ENCODE measurements at regions of chr19 and their contacts with region 1.

Region 1: GRCh38 chr19:1275260-1275975 is at the start of gene FAM174C:
- DNase-seq: peak; percentile 90 to 97 (median 96)
- ATAC-seq: peak; percentile 90
- H3K4me3 ChIP-seq: peak within 1 kb of the TSS; percentile 75
- H3K4me3 Mint-ChIP-seq: peak within 1 kb of the TSS; percentile 79 to 93 (median 88)
- H3K27ac ChIP-seq: peak within 1 kb of the TSS; percentile 93
- H3K27ac Mint-ChIP-seq: peak within 1 kb of the TSS; percentile 62 to 98 (median 95)
- H3K4me1 ChIP-seq: peaks cover 46 to 60% of the 10 kb centered on the region in 2 donors
- H3K4me1 Mint-ChIP-seq: peaks cover 40 to 60% (median 48%) of the 10 kb centered on the region in 7 donors
- H3K27me3 ChIP-seq: no peaks in the 10 kb centered on the region
- H3K27me3 Mint-ChIP-seq: no peaks in the 10 kb centered on the region
- total RNA-seq, gene FAM174C: 31.7 to 57.3 (median 47.7) TPM

Region 2: DNA sequence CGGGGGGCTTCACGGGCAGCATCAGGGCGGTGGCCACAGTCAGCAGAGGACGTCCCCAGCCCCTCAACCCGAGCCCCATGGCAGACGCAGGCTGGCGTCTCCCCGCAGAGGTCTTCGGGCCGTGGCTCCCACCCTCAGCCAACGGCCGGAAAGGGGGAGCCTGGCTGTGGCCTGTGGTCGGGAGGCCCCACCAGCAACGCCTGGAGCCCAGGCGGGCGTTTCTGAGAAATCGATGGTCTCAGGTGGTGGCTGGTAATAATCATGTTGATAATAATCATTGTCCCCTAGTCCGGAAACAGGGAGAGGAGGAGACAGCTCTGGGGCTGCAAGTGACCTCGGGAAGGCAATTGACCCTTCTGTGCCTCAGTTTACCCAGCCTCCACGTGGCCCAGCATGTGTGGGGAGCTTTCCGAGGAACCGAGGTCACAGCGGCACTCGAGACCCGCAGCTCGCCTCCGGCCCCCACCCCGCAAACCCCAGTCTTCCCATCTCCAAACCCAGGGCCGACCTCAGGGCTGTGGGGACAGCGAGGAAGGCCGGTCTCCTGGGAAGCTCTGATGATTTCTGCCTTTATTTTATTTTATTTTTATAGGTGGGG is 580.0 kb before region 1 on chr19 and contains the start of gene PRSS57:
- CTCF ChIA-PET with region 1: no interaction called
- POLR2A ChIA-PET with region 1: no interaction called
- intact Hi-C with region 1: no loop called
- DNase-seq: no peak
- ATAC-seq: peak; percentile 10
- H3K4me3 ChIP-seq: no peak within 1 kb of the TSS
- H3K4me3 Mint-ChIP-seq: peak within 1 kb of the TSS in 3 of 10 donors; percentile 16 to 63 (median 45)
- H3K27ac ChIP-seq: no peak within 1 kb of the TSS
- H3K27ac Mint-ChIP-seq: no peak within 1 kb of the TSS
- H3K4me1 ChIP-seq: no peaks in the 10 kb centered on the region
- H3K4me1 Mint-ChIP-seq: peaks cover 0 to 1% (median 0%) of the 10 kb centered on the region in 7 donors
- H3K27me3 ChIP-seq: peaks cover 0 to 2% of the 10 kb centered on the region in 2 donors
- H3K27me3 Mint-ChIP-seq: peaks cover 0 to 24% (median 15%) of the 10 kb centered on the region in 5 donors
- total RNA-seq, gene PRSS57: 0.27 to 2.1 TPM in 2 of 5 experiments, not detected in the others

Region 3: DNA sequence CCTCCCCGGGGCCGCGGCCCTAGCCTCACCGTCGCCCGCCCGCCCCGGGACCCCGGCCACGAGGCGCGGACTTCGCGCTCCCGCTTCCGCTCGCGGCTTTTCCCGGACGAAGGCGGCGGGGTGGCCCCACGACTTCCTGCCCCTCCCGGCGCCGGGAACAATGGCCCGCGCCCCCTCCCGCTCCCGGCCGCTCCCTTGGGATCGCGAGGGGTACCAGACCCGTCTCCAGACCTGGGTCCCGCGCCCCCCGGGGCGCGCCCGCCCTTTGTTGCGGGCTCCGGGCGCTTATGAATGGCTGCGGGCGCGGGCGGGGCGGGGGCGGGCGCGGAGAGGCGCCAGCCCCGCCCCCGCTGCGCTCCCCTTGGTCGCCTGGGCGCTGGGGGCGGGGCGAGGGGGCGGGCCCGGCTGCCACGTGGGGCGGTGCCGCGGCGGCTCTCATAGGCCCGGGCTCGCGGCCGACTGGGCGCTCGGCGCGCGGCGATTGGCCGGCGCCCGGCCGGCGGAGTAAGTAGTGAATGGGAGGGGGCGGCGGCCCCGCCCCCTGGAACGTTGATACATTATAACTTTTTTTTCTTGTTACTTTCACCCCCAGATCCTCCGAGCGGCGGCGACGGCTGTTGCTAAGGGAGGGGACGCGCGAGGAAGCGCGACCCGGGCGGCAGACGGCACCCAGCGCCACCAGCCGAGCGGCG is 26.0 kb before region 1 on chr19:
- CTCF ChIA-PET with region 1: interaction called, 7 read pairs
- POLR2A ChIA-PET with region 1: interaction called, 60 read pairs
- intact Hi-C with region 1: no loop called
- DNase-seq: peak; percentile 88 to 97 (median 94)
- ATAC-seq: peak; percentile 74
- H3K4me3 ChIP-seq: peak overlapping the region; percentile 63
- H3K4me3 Mint-ChIP-seq: peak overlapping the region; percentile 80 to 95 (median 88)
- H3K27ac ChIP-seq: peak overlapping the region; percentile 94
- H3K27ac Mint-ChIP-seq: peak overlapping the region; percentile 62 to 95 (median 89)
- H3K4me1 ChIP-seq: peaks cover 22 to 27% of the 10 kb centered on the region in 2 donors
- H3K4me1 Mint-ChIP-seq: peaks cover 0 to 11% (median 10%) of the 10 kb centered on the region in 7 donors
- H3K27me3 ChIP-seq: no peaks in the 10 kb centered on the region
- H3K27me3 Mint-ChIP-seq: no peaks in the 10 kb centered on the region

Region 4: DNA sequence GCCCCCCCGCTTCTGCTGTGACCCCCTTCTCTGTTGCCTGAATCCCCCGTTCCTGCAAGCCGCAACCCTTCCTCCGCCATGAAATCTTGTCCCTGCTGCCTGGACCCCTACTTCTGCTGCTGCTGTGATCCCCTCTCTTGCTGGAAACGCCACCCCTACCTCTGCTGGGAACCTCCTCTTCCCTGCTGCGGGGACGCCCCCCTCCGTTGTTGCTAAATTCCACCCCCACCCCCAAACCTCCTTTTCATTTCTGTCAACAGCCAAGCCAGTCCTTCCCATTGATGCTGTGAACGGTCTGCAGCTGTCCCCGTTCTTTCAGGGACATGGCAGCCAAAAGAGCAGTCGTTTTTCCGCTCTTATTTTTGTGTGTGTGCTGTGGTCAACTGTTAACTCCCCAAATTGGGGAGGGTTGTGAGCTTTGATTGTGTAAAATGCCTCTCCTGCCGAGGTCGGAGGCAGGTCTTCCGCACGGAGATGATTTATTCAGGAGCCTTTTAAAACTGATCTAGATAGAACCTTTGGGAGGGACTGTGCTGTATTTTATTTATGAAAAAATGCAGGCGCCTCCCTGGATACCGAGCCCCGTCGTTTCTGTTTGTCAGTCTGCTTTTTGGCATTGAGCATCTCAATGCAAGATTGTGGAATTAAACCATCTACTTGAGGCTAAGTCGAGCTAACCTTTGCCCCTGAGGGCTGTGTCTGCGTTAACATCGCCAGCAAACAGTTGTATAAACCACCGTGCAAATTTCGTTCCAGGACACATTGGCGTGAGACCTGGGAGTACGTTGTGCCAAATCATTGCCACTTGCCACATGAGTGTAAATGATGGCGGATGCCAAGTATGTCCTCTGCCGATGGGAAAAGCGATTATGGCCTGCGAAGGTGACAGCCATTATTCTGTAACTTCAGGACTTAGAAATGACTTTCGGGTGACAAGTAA is 80.4 kb after region 1 on chr19:
- CTCF ChIA-PET with region 1: no interaction called
- POLR2A ChIA-PET with region 1: no interaction called
- intact Hi-C with region 1: loop called in 1 of 2 experiments (anchors 5 kb)
- DNase-seq: no peak
- ATAC-seq: no peak
- H3K4me3 ChIP-seq: peak overlapping the region; percentile 60
- H3K4me3 Mint-ChIP-seq: peak overlapping the region; percentile 74 to 98 (median 90)
- H3K27ac ChIP-seq: peak overlapping the region; percentile 59
- H3K27ac Mint-ChIP-seq: peak overlapping the region in 8 of 9 donors; percentile 50 to 86 (median 78)
- H3K4me1 ChIP-seq: peaks cover 5 to 6% of the 10 kb centered on the region in 2 donors
- H3K4me1 Mint-ChIP-seq: peaks cover 9 to 24% (median 18%) of the 10 kb centered on the region in 7 donors
- H3K27me3 ChIP-seq: no peaks in the 10 kb centered on the region
- H3K27me3 Mint-ChIP-seq: no peaks in the 10 kb centered on the region

Region 5: GRCh38 chr19:1401138-1401888 is 125.9 kb after region 1 on chr19 and contains the start of gene GAMT:
- CTCF ChIA-PET with region 1: interaction called, 3 read pairs
- POLR2A ChIA-PET with region 1: interaction called, 4 read pairs
- intact Hi-C with region 1: loop called in 1 of 2 experiments (anchors 1 kb)
- DNase-seq: peak; percentile 28 to 71 (median 56)
- ATAC-seq: peak; percentile 88
- H3K4me3 ChIP-seq: peak within 1 kb of the TSS; percentile 58
- H3K4me3 Mint-ChIP-seq: peak within 1 kb of the TSS; percentile 60 to 86 (median 77)
- H3K27ac ChIP-seq: peak within 1 kb of the TSS; percentile 59
- H3K27ac Mint-ChIP-seq: peak within 1 kb of the TSS in 4 of 9 donors; percentile 38 to 72 (median 56)
- H3K4me1 ChIP-seq: peaks cover 3 to 20% of the 10 kb centered on the region in 2 donors
- H3K4me1 Mint-ChIP-seq: peaks cover 0 to 20% (median 12%) of the 10 kb centered on the region in 7 donors
- H3K27me3 ChIP-seq: no peaks in the 10 kb centered on the region
- H3K27me3 Mint-ChIP-seq: peaks cover 0 to 9% (median 0%) of the 10 kb centered on the region in 5 donors
- total RNA-seq, gene GAMT: 10.9 to 24.2 (median 17.5) TPM

Region 6: DNA sequence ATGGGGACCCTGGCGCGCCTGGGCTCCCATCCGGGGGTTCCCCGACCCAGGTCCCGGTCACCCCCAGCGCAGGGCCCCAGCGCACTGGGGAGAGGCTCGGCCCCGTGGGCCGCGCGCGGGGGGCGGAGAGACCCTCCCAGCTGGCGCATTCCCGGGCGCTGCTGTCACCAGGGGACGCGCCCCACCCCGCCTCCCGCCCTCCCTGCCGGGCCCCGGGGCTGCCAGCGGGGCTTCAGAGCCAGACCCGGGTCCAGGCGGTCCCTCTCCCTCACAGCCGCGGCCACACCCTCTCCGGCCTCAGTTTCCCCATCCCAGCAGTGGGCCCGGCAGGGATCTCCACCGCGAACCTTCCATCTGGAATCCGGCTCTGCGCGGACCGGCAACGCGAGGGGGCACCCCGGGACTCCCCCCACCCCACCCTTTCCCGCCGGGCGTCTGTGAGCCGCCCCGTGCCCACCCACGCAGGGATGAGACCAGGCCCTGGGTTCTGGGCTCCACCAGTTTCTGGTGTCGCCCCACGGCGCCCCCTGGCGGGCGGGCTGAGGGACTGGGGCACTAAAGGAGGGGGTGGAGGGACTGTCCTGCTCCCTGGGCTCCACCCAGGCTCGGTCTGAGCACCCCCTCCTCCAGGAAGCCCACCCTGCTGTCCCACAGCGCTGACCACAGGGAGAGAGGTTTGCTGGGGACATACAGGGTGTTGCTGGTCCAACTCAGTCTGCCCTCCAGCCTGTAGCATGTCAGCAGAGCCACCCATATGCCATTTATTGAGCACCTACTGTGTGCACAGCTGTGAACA is 238.3 kb after region 1 on chr19:
- CTCF ChIA-PET with region 1: no interaction called
- POLR2A ChIA-PET with region 1: no interaction called
- intact Hi-C with region 1: loop called in 1 of 2 experiments (anchors 2 kb)
- DNase-seq: peak; percentile 44 to 83 (median 64)
- ATAC-seq: peak; percentile 74
- H3K4me3 ChIP-seq: no peak overlapping the region
- H3K4me3 Mint-ChIP-seq: peak overlapping the region in 5 of 10 donors; percentile 17 to 62 (median 33)
- H3K27ac ChIP-seq: no peak overlapping the region
- H3K27ac Mint-ChIP-seq: no peak overlapping the region
- H3K4me1 ChIP-seq: peaks cover 0 to 13% of the 10 kb centered on the region in 2 donors
- H3K4me1 Mint-ChIP-seq: peaks cover 0 to 27% (median 15%) of the 10 kb centered on the region in 7 donors
- H3K27me3 ChIP-seq: no peaks in the 10 kb centered on the region
- H3K27me3 Mint-ChIP-seq: peaks cover 0 to 21% (median 0%) of the 10 kb centered on the region in 5 donors